Activated CD4-positive, alpha-beta T cell treated with anti-CD3 and anti-CD28 coated beads, Interleukin-2, amount 10 ng/mL, durations not matched to agents 24 days and 14 days (primary cell): ENCODE measurements at regions of chr11 and their contacts with region 1.

Region 1: GRCh38 chr11:114439229-114440120 is at the start of gene REXO2:
- DNase-seq: peak; percentile 98
- H3K4me3 Mint-ChIP-seq: peak within 1 kb of the TSS; percentile 99
- H3K27ac Mint-ChIP-seq: peak within 1 kb of the TSS; percentile 95
- H3K4me1 Mint-ChIP-seq: peaks cover 38% of the 10 kb centered on the region
- H3K27me3 Mint-ChIP-seq: peaks cover 3% of the 10 kb centered on the region
- total RNA-seq, gene REXO2: 98.6 and 99.5 TPM in 2 replicates

Region 2: GRCh38 chr11:114348200-114349191 is 91.0 kb before region 1 on chr11:
- intact Hi-C with region 1: loop called (anchors 2 kb)
- DNase-seq: peak; percentile 82
- H3K4me3 Mint-ChIP-seq: no peak overlapping the region
- H3K27ac Mint-ChIP-seq: no peak overlapping the region
- H3K4me1 Mint-ChIP-seq: peaks cover 5% of the 10 kb centered on the region
- H3K27me3 Mint-ChIP-seq: no peaks in the 10 kb centered on the region